Aorta (tissue), 5 donors: ENCODE measurements at regions of chr22 and their contacts with region 1.

Region 1: DNA sequence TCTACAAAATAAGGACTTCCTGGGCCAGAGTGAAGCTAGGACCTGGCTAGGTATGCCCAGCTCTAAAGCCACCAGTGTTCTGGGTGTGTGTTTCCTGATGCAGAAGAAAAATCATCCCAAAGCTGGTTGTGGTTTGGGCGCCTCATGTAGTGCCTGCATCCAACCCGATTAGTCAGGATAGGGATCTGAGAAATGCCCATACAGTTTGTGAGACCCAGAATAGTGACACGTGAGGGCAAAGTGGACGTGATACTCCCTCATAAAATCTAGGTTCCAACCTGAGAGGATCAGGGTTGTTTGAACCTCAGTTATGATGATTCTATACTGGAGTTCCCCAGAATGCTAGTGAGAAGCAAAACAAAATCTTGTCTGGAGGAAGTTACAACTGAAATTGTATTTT is 238.4 kb downstream of the TBC1D22A start:
- DNase-seq: no peak
- ATAC-seq: no peak
- H3K4me3 ChIP-seq: no peak overlapping the region
- H3K27ac ChIP-seq: no peak overlapping the region
- H3K4me1 ChIP-seq: no peaks in the 10 kb centered on the region
- H3K27me3 ChIP-seq: no peaks in the 10 kb centered on the region

Region 2: DNA sequence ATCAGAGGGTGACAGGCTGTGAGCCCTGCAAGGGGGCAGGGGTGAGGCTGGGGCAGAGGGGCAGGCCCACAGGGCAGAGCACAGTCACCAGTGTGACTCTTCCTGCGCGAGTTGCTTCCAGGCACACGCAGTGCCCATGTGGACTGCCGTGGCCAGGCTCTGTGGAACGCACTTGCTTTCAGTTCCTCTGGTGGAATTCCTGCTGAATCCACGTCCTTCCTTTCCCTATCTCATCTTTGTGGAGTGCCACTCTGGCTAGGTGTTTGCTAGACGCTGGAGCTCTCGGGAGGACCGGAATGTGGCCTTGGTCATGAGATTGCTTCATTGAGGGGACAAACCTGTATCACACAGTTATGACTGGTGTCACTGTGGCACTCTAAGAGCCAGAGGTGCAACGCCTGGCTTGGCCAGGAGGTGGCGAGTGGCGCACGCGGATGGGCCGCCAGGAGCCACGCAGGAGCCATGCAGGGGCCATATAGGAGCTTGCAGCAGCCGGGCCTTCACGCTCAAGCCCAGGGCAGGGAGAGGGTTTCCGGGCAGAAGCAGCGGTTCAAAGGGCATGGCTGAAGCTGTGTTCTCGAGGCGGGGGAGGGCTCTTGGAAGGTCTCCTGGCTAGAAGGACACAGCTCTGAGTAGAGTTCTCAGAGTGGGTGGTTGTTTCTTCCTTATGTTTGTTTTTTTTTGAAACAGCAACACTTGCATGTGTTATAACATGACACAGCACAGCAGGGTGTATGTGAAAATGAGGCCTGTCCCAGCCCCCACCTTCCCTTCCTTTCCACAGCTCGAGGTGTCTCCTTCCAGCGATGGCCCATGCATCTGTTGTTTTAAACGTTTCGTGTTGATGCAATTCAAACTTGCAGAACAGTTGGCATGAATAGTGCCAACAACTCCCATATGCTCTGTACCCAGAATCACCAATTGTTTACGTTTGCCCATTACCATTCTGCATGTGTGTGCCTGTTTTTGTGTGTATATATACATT is 202.2 kb before region 1 on chr22:
- intact Hi-C with region 1: loop called in 1 of 2 experiments (anchors 10 kb)
- DNase-seq: peak; percentile 74 to 90
- ATAC-seq: peak; percentile 88
- H3K4me3 ChIP-seq: no peak overlapping the region
- H3K27ac ChIP-seq: no peak overlapping the region
- H3K4me1 ChIP-seq: no peaks in the 10 kb centered on the region
- H3K27me3 ChIP-seq: no peaks in the 10 kb centered on the region